Activated naive CD4-positive, alpha-beta T cell treated with anti-CD3 and anti-CD28 coated beads, Interleukin-2, amount 10 ng/mL, durations not matched to agents 7 days and 5 days (primary cell): ENCODE measurements at regions of chr19 and their contacts with region 1.

Region 1: GRCh38 chr19:39412100-39412866 is at the start of gene PLEKHG2:
- DNase-seq: peak; percentile 97
- H3K4me3 Mint-ChIP-seq: peak within 1 kb of the TSS; percentile 90
- H3K27ac Mint-ChIP-seq: peak within 1 kb of the TSS; percentile 92
- H3K4me1 Mint-ChIP-seq: peaks cover 37% of the 10 kb centered on the region
- H3K27me3 Mint-ChIP-seq: peaks cover 5% of the 10 kb centered on the region

Region 2: DNA sequence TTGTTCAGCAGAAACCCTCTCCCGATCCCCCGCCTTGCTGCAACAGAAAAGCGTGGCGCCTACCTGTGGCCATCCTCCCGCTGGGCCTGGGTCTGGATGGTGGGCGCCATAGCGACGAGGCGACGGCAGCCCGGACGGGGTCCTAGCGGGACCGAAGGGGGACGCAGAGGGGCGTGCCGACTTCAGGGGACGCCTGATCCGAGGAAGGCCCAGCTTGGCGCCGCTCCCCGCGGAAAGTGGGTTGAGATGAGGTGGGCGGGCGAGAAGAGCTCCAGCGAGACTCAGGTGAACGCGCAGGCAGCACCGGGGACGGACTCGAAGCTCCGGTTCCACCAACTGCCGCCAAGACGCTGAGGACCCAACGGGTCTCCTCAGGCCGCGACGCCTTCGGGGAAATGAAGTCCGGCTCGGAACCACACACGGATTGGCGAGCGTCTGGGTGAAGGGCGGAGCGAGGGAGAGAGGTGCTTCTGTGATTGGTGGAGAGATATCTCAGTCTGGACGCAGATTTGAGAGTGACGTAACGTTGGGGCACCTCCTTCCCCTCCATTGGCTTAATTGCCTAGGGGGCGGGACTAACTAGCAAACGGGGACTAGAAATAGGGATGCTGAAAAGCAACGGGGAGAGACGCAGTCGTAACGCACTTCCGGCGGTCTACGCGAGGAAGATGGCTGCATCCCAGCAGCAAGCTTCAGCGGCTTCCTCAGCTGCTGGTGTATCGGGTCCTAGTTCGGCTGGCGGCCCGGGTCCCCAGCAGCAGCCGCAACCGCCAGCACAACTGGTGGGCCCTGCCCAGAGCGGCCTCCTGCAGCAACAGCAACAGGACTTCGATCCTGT is 21.3 kb before region 1 on chr19 and contains the starts of genes MED29 and PAF1:
- CTCF ChIA-PET with region 1: interaction called, 96 read pairs
- DNase-seq: peak; percentile 98
- H3K4me3 Mint-ChIP-seq: peak within 1 kb of the TSS; percentile 94
- H3K27ac Mint-ChIP-seq: peak within 1 kb of the TSS; percentile 99
- H3K4me1 Mint-ChIP-seq: peaks cover 39% of the 10 kb centered on the region
- H3K27me3 Mint-ChIP-seq: no peaks in the 10 kb centered on the region

Region 3: DNA sequence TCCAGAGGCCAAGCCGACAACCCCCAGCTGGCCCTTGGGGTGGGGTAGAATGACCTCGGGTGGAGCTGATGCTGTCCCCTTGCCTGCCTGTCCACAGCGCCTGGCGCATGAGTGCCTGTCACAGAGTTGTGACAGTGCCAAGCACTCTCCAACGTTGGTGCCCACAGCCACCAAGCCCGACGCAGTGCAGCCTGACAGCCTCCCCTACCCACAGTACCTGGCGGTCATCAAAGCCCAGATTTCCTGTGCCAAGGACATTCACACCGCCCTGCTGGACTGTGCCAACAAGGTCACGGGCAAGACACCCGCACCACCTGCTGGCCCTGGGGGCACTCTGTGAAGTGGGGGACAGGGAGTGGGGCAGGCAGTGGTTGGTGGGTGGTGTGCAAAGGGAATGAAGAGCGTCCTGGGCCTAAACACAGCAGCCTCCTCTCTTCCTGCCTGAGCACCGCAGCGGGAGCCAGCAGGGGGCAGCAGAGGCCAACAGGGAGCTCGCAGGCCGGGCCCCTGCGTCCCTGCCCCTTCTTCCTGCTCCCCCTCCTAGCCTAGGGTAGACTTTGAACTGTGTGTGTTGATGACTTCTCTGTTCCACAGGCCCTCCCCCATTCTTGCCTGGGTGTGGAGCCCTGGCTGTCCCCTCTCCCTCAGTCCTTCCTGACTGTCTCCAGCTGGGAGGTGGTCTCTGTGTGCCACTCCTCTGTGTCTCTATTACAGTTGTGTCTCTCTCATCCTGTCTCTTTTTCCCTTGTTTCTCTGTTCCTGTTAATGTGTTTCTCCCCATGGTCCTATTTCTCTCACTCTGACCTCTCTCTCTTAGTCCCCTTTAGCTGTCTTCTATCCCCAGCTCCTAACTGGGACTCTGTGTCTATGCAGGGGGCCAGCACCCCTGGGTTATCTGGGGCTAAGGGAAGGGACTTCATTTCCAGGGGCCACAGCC is 14.7 kb before region 1 on chr19:
- CTCF ChIA-PET with region 1: interaction called, 96 read pairs
- DNase-seq: peak; percentile 96
- H3K4me3 Mint-ChIP-seq: peak overlapping the region; percentile 47
- H3K27ac Mint-ChIP-seq: peak overlapping the region; percentile 96
- H3K4me1 Mint-ChIP-seq: peaks cover 73% of the 10 kb centered on the region
- H3K27me3 Mint-ChIP-seq: no peaks in the 10 kb centered on the region